CD8-positive, alpha-beta T cell (primary cell): ENCODE measurements at regions of chr19 and their contacts with region 1.

Region 1: GRCh38 chr19:11924886-11925650 is at the start of gene ZNF700:
- DNase-seq: peak; percentile 83 to 95 (median 92)
- ATAC-seq: peak; percentile 86
- H3K4me3 ChIP-seq: peak within 1 kb of the TSS; percentile 82 to 96
- H3K4me3 Mint-ChIP-seq: peak within 1 kb of the TSS; percentile 94
- H3K27ac ChIP-seq: peak within 1 kb of the TSS; percentile 85 to 86
- H3K27ac Mint-ChIP-seq: peak within 1 kb of the TSS; percentile 97
- H3K4me1 ChIP-seq: peaks cover 24% of the 10 kb centered on the region
- H3K4me1 Mint-ChIP-seq: peaks cover 53% of the 10 kb centered on the region
- H3K27me3 ChIP-seq: no peaks in the 10 kb centered on the region
- H3K27me3 Mint-ChIP-seq: no peaks in the 10 kb centered on the region
- CTCF ChIP-seq: no peak
- total RNA-seq, gene ZNF700: 10.8 to 10.9 TPM

Region 2: DNA sequence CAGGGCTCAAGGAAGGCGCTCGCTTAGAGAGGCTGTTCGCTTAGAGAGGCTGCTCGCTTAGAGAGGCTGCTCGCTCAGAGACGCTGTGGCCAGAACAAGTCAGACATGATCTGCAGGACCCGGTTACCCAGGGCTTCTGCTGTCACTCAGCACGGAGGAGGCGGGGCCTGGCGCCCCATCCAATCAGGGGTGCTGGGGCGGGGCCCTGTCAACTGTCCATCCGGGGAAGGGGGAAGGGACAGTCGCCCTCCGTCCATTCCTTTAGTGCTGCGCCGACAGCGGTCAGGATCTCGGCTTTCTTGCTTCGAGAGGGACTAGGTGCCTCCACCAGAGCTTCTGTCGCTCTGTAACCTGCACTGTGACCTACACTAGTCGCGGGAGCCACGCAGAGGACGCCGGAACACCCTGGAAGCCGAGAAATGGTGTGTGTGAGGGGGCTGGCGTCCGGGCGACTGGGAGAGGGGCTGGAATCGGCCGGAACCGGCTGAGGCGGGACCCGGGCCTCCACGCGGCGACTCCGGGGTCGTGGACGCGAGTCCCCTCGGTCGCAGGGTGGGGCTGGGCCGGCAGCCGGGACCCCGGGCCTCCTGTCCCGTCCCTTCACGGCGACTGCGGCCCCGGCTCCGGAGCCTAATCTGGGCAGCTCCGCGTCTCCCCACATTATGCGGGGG is 110.9 kb before region 1 on chr19 and contains the start of gene ZNF440:
- CTCF ChIA-PET with region 1: interaction called, 4 read pairs
- POLR2A ChIA-PET with region 1: no interaction called
- intact Hi-C with region 1: loop called in 1 of 2 experiments (anchors 5 kb)
- DNase-seq: peak; percentile 66 to 88 (median 79)
- ATAC-seq: peak; percentile 99
- H3K4me3 ChIP-seq: peak within 1 kb of the TSS; percentile 89 to 95
- H3K4me3 Mint-ChIP-seq: peak within 1 kb of the TSS; percentile 95
- H3K27ac ChIP-seq: peak within 1 kb of the TSS; percentile 45 to 51
- H3K27ac Mint-ChIP-seq: peak within 1 kb of the TSS; percentile 86
- H3K4me1 ChIP-seq: peaks cover 6% of the 10 kb centered on the region
- H3K4me1 Mint-ChIP-seq: peaks cover 32% of the 10 kb centered on the region
- H3K27me3 ChIP-seq: no peaks in the 10 kb centered on the region
- H3K27me3 Mint-ChIP-seq: no peaks in the 10 kb centered on the region
- CTCF ChIP-seq: no peak
- total RNA-seq, gene ZNF440: 6.4 to 7.9 TPM

Region 3: DNA sequence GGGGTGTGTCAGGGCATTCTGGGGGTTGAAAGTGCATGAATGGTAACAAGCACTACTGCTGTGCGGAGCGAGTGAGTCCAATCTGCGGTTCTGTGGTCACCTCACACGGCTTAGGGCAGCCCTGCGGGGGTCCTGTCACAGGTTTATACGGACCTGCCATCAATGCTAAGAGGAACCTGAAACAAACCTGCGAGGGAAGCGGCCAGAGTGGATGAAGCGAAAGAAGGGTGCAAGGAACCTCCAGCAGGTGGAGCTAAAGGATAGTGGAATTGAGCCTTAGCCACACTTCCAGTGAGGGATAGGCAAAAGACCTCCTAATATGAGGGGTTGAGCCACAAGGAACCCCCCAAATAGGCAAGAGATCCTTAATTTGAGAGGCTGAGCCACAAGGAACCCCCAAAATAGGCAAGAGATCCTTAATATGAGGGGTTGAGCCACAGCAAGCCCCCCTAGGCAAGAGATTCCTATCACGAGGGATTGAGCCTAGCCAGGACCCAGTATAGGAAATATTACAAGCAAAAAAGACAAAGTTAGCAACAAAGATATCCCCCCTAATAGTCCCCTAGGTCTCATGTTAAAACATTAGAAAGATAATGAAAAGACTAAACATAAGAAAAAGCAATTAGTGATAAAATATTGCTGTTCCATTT is 43.8 kb before region 1 on chr19:
- CTCF ChIA-PET with region 1: interaction called, 55 read pairs
- POLR2A ChIA-PET with region 1: interaction called, 5 read pairs
- intact Hi-C with region 1: loop called (anchors 1 to 5 kb)
- DNase-seq: peak; percentile 33 to 79 (median 66)
- ATAC-seq: peak; percentile 62
- H3K4me3 ChIP-seq: peak overlapping the region in 1 of 2 experiments; percentile 33
- H3K4me3 Mint-ChIP-seq: no peak overlapping the region
- H3K27ac ChIP-seq: no peak overlapping the region
- H3K27ac Mint-ChIP-seq: no peak overlapping the region
- H3K4me1 ChIP-seq: peaks cover 3% of the 10 kb centered on the region
- H3K4me1 Mint-ChIP-seq: peaks cover 2% of the 10 kb centered on the region
- H3K27me3 ChIP-seq: no peaks in the 10 kb centered on the region
- H3K27me3 Mint-ChIP-seq: no peaks in the 10 kb centered on the region
- CTCF ChIP-seq: peak; percentile 53

Region 4: GRCh38 chr19:11942843-11943108 is 17.7 kb after region 1 on chr19:
- CTCF ChIA-PET with region 1: interaction called, 13 read pairs
- POLR2A ChIA-PET with region 1: interaction called, 3 read pairs
- intact Hi-C with region 1: no loop called
- DNase-seq: peak in 1 of 9 experiments; percentile 13
- ATAC-seq: no peak
- H3K4me3 ChIP-seq: no peak overlapping the region
- H3K4me3 Mint-ChIP-seq: no peak overlapping the region
- H3K27ac ChIP-seq: no peak overlapping the region
- H3K27ac Mint-ChIP-seq: no peak overlapping the region
- H3K4me1 ChIP-seq: no peaks in the 10 kb centered on the region
- H3K4me1 Mint-ChIP-seq: no peaks in the 10 kb centered on the region
- H3K27me3 ChIP-seq: no peaks in the 10 kb centered on the region
- H3K27me3 Mint-ChIP-seq: no peaks in the 10 kb centered on the region
- CTCF ChIP-seq: no peak

Region 5: DNA sequence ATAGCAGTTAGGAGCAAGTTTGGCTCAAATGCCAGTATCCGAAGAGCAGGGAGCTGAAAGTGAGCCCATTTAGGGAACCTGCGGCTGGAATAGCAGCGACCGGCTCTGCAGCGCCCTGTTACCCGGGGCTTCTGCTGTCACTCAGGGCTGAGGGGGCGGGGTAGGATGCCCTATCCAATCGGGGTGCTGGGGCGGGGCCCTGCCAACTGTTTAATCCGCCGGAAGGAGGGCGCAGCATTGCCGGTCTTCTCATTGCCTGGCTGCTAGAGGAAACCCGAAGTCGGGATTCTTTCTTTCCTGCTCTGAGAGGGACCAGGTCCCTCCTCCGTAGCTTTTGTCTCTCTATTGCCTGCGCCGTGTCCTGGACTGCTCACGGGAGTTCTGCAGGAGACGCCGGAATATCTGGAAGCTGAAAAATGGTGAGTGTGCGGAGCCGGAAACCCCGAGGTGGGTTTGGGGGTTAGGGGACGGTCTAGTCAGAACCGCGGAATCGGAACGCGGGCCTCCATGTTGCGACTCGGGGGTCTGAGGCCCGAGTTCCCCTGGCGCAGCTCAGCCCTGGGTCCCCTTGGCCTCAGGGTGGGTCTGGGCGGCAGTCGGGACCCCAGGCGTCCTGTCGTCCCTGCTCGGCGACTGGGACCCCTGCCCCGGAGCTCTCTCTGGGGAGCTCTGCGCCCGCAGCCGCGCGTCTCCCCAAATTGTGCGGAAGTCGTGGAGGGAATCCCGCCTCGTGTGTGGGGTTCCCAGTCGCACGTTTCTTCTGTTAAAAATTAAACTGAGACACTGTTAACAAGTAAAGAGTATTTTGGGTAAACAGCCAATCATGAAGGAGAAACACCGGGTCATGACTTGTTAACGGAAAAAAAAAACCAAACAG is 62.6 kb after region 1 on chr19:
- CTCF ChIA-PET with region 1: interaction called, 222 read pairs
- POLR2A ChIA-PET with region 1: interaction called, 26 read pairs
- intact Hi-C with region 1: loop called (anchors 1 kb)
- DNase-seq: peak; percentile 82 to 94 (median 91)
- ATAC-seq: peak; percentile 92
- H3K4me3 ChIP-seq: peak overlapping the region; percentile 89 to 98
- H3K4me3 Mint-ChIP-seq: peak overlapping the region; percentile 99
- H3K27ac ChIP-seq: peak overlapping the region; percentile 79 to 83
- H3K27ac Mint-ChIP-seq: peak overlapping the region; percentile 91
- H3K4me1 ChIP-seq: peaks cover 10% of the 10 kb centered on the region
- H3K4me1 Mint-ChIP-seq: peaks cover 26% of the 10 kb centered on the region
- H3K27me3 ChIP-seq: no peaks in the 10 kb centered on the region
- H3K27me3 Mint-ChIP-seq: no peaks in the 10 kb centered on the region
- CTCF ChIP-seq: no peak

Region 6: DNA sequence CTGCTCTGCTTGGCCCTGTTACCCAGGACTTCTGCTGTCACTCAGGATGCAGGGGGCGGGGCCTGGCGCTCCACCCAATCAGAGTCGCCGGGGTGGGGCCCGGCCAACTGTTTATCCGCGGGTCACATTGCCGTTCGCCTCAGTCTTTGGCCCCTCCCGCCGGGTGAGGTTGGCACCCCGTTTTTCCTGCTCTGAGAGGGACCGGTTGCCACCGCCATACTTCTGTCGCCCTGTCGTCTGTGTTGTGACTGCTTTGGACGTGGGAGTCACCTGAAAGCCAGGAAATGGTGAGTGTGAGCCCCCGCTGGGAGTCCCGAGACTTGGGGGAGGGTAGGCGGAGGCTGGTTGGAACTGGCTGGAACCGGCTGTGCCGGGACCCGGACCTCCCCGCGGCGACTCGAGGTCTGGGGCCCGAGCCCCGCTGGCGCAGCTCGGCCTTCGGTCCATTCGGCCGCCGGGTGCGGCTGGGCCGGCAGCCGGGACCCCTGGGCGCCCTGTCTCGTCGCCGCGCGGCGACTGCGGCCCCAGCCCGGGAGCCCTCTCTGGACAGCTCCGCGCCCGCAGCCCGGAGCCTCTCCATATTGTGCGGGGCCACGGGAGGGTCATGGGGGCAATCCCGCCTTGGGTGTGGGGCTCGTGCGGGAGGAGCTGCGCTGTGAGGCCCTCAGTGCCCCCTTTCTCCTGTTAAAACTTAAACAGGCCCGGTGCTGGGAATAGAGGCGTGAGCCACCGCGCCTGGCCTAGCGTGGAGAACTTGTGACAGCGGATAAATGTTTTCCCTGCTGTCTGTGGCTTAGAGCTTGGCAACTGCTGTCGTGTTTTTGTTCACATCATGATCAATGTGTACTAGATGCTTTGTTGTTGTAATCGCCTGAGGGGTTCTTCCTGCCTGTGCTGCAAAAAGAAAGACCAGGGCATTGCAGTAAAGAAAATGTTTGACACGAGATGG is 139.8 kb after region 1 on chr19 and contains the start of gene ZNF844:
- CTCF ChIA-PET with region 1: interaction called, 31 read pairs
- POLR2A ChIA-PET with region 1: interaction called, 3 read pairs
- intact Hi-C with region 1: no loop called
- DNase-seq: peak; percentile 59 to 83 (median 69)
- ATAC-seq: peak; percentile 84
- H3K4me3 ChIP-seq: peak within 1 kb of the TSS; percentile 66 to 71
- H3K4me3 Mint-ChIP-seq: peak within 1 kb of the TSS; percentile 89
- H3K27ac ChIP-seq: peak within 1 kb of the TSS; percentile 69 to 71
- H3K27ac Mint-ChIP-seq: peak within 1 kb of the TSS; percentile 82
- H3K4me1 ChIP-seq: peaks cover 8% of the 10 kb centered on the region
- H3K4me1 Mint-ChIP-seq: peaks cover 11% of the 10 kb centered on the region
- H3K27me3 ChIP-seq: no peaks in the 10 kb centered on the region
- H3K27me3 Mint-ChIP-seq: no peaks in the 10 kb centered on the region
- CTCF ChIP-seq: no peak
- total RNA-seq, gene ZNF844: 12.1 to 14.6 TPM